CD4-positive, alpha-beta memory T cell (primary cell): ENCODE measurements at regions of chr5 and their contacts with region 1.

Region 1: GRCh38 chr5:160508780-160509361 is 87.2 kb downstream of the PTTG1 start:
- DNase-seq: peak; percentile 76 to 83 (median 79)
- H3K4me3 ChIP-seq: no peak overlapping the region
- H3K4me3 Mint-ChIP-seq: peak overlapping the region in 3 of 8 donors; percentile 20 to 51 (median 40)
- H3K27ac ChIP-seq: no peak overlapping the region
- H3K27ac Mint-ChIP-seq: peak overlapping the region; percentile 2 to 89 (median 76)
- H3K4me1 ChIP-seq: peaks cover 35% of the 10 kb centered on the region
- H3K4me1 Mint-ChIP-seq: peaks cover 25 to 35% (median 26%) of the 10 kb centered on the region in 4 donors
- H3K27me3 ChIP-seq: no peaks in the 10 kb centered on the region
- H3K27me3 Mint-ChIP-seq: no peaks in the 10 kb centered on the region

Region 2: DNA sequence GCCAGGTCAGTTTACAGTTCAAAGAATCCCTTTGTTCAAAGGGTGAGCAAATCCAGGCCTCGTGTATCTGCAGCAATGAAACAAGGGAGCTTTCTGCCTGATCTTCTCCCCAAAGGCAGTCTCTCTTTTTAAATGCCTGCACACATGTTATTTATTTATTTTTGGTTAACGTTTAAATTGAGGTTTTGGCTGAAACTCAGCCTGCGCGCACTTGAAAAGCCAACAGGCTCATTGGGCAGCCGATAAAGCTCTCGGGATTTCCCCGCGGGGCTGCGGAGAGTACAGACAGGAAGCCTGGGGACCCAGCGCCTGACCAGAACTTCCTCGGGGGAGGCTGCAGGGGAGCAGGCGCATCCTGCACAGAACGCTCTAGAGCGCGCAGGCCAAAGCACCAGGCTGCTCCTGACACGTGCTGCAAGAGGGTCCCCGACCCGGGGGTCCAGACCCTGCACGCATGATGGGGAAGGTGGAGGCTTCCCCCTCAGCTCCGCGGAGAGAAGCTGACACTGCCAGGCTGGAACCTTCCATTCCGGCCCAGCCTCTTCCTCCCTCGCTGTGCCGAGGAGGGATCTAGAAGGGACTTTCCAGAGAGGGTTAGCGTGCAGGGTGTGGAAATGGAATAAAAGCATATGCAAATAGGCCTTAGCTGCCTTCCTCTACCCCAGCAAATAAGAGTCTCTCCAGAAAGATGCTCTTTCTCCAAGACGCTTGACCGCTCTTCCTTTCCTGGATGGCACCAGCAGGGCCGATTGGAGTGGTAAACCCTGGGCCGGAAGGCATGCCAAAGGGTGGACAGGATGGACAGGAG is 41.1 kb before region 1 on chr5:
- CTCF ChIA-PET with region 1: interaction called, 17 read pairs
- POLR2A ChIA-PET with region 1: interaction called, 15 read pairs
- intact Hi-C with region 1: loop called (anchors 1 kb)
- DNase-seq: peak; percentile 70 to 90 (median 77)
- H3K4me3 ChIP-seq: peak overlapping the region; percentile 73 to 75
- H3K4me3 Mint-ChIP-seq: peak overlapping the region; percentile 90 to 99 (median 96)
- H3K27ac ChIP-seq: peak overlapping the region; percentile 70
- H3K27ac Mint-ChIP-seq: peak overlapping the region; percentile 90 to 98 (median 97)
- H3K4me1 ChIP-seq: peaks cover 59% of the 10 kb centered on the region
- H3K4me1 Mint-ChIP-seq: peaks cover 43 to 84% (median 62%) of the 10 kb centered on the region in 4 donors
- H3K27me3 ChIP-seq: no peaks in the 10 kb centered on the region
- H3K27me3 Mint-ChIP-seq: no peaks in the 10 kb centered on the region

Region 3: DNA sequence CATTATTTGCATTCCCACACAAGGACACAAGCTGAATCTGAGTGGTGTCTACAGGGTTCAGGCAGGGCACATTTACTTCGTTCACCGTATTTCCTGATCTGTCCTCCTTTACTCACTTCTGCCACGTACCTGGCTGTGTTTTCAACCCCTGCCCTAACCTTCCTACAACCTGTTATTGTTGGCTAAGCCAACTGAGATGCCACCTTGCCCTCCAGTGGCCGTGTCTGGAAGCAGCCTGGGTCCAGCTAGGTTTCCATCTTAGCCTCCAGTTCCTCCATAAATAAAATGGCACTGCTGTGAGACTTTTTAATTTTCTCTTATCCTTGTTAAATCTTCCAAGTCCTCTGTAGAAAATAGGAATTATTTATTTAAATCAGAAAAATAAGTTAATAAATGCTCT is 278.4 kb after region 1 on chr5:
- CTCF ChIA-PET with region 1: interaction called, 4 read pairs
- POLR2A ChIA-PET with region 1: no interaction called
- intact Hi-C with region 1: loop called (anchors 2 kb)
- DNase-seq: peak in 2 of 5 donors; percentile 1 to 37
- H3K4me3 ChIP-seq: no peak overlapping the region
- H3K4me3 Mint-ChIP-seq: no peak overlapping the region
- H3K27ac ChIP-seq: no peak overlapping the region
- H3K27ac Mint-ChIP-seq: no peak overlapping the region
- H3K4me1 ChIP-seq: no peaks in the 10 kb centered on the region
- H3K4me1 Mint-ChIP-seq: no peaks in the 10 kb centered on the region
- H3K27me3 ChIP-seq: no peaks in the 10 kb centered on the region
- H3K27me3 Mint-ChIP-seq: peaks cover 1 to 2% of the 10 kb centered on the region in 2 donors

Region 4: DNA sequence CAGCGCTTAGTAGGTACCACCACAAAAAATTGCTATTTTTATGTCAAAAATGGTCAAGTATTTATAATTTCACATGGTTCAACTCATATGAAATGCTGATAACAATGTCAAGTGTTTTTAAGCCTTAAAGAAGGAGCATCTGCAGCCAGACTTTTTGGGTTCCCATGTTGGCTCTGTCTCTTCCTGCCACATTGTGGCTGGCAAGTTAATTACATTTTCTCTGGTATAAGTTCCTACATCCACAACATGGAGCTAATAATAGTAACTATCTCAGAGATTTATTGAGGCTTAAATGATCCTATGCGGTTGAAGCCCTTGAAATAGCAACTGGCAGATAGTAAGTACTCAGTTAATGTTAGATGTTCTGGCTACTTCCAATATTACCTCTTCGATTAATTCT is 337.8 kb after region 1 on chr5:
- CTCF ChIA-PET with region 1: no interaction called
- POLR2A ChIA-PET with region 1: no interaction called
- intact Hi-C with region 1: loop called (anchors 2 kb)
- DNase-seq: no peak
- H3K4me3 ChIP-seq: no peak overlapping the region
- H3K4me3 Mint-ChIP-seq: no peak overlapping the region
- H3K27ac ChIP-seq: no peak overlapping the region
- H3K27ac Mint-ChIP-seq: no peak overlapping the region
- H3K4me1 ChIP-seq: no peaks in the 10 kb centered on the region
- H3K4me1 Mint-ChIP-seq: no peaks in the 10 kb centered on the region
- H3K27me3 ChIP-seq: no peaks in the 10 kb centered on the region
- H3K27me3 Mint-ChIP-seq: peaks cover 0 to 2% of the 10 kb centered on the region in 2 donors

Region 5: GRCh38 chr5:160869989-160870521 is 361.2 kb after region 1 on chr5:
- CTCF ChIA-PET with region 1: no interaction called
- POLR2A ChIA-PET with region 1: no interaction called
- intact Hi-C with region 1: no loop called
- DNase-seq: no peak
- H3K4me3 ChIP-seq: no peak overlapping the region
- H3K4me3 Mint-ChIP-seq: peak overlapping the region in 1 of 8 donors; percentile 29
- H3K27ac ChIP-seq: no peak overlapping the region
- H3K27ac Mint-ChIP-seq: no peak overlapping the region
- H3K4me1 ChIP-seq: no peaks in the 10 kb centered on the region
- H3K4me1 Mint-ChIP-seq: peaks cover 4 to 17% (median 6%) of the 10 kb centered on the region in 4 donors
- H3K27me3 ChIP-seq: no peaks in the 10 kb centered on the region
- H3K27me3 Mint-ChIP-seq: peaks cover 5 to 11% of the 10 kb centered on the region in 2 donors

Region 6: GRCh38 chr5:161691911-161692310 is 1183.0 kb after region 1 on chr5:
- CTCF ChIA-PET with region 1: no interaction called
- POLR2A ChIA-PET with region 1: no interaction called
- intact Hi-C with region 1: loop called (anchors 5 kb)
- DNase-seq: no peak
- H3K4me3 ChIP-seq: no peak overlapping the region
- H3K4me3 Mint-ChIP-seq: no peak overlapping the region
- H3K27ac ChIP-seq: no peak overlapping the region
- H3K27ac Mint-ChIP-seq: no peak overlapping the region
- H3K4me1 ChIP-seq: no peaks in the 10 kb centered on the region
- H3K4me1 Mint-ChIP-seq: no peaks in the 10 kb centered on the region
- H3K27me3 ChIP-seq: no peaks in the 10 kb centered on the region
- H3K27me3 Mint-ChIP-seq: no peaks in the 10 kb centered on the region